T-cell (primary cell): ENCODE measurements at regions of chr2 and their contacts with region 1.

Region 1: DNA sequence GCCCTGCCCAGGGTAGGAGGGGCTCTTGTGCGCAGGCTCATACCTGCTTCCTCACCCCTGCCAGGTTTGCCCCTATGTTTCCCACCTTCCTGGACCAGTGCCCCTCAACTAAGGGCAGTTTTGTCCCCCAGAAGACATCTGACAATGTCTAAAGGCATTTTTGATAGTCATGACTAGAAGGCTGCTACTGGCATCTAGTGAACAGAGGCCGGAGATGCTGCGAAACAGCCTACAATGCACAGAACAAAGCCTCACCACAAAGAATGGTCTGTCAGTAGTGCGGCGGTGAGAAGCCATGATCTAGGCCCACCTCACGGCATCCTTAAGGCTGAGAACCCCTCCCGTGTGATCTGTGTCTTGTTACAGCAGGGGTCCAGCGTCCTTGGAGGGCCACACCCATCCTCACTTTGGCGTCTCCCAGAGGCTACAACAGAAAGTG is 96.0 kb downstream of the TMEM17 start:
- DNase-seq: peak in 1 of 35 experiments; percentile 11
- ATAC-seq: no peak
- H3K4me3 ChIP-seq: no peak overlapping the region
- H3K4me3 Mint-ChIP-seq: no peak overlapping the region
- H3K27ac ChIP-seq: no peak overlapping the region
- H3K27ac Mint-ChIP-seq: no peak overlapping the region
- H3K4me1 ChIP-seq: peaks cover 0 to 9% of the 10 kb centered on the region in 2 experiments
- H3K4me1 Mint-ChIP-seq: peaks cover 0 to 11% (median 3%) of the 10 kb centered on the region in 3 donors
- H3K27me3 ChIP-seq: no peaks in the 10 kb centered on the region
- H3K27me3 Mint-ChIP-seq: no peaks in the 10 kb centered on the region

Region 2: GRCh38 chr2:61993444-61994024 is 416.5 kb before region 1 on chr2:
- CTCF ChIA-PET with region 1: interaction called, 5 to 10 read pairs
- POLR2A ChIA-PET with region 1: no interaction called
- DNase-seq: peak in 9 of 35 experiments; percentile 1 to 57 (median 6)
- ATAC-seq: no peak
- H3K4me3 ChIP-seq: no peak overlapping the region
- H3K4me3 Mint-ChIP-seq: no peak overlapping the region
- H3K27ac ChIP-seq: no peak overlapping the region
- H3K27ac Mint-ChIP-seq: no peak overlapping the region
- H3K4me1 ChIP-seq: no peaks in the 10 kb centered on the region
- H3K4me1 Mint-ChIP-seq: peaks cover 2 to 13% (median 4%) of the 10 kb centered on the region in 3 donors
- H3K27me3 ChIP-seq: no peaks in the 10 kb centered on the region
- H3K27me3 Mint-ChIP-seq: no peaks in the 10 kb centered on the region

Region 3: GRCh38 chr2:62254056-62254917 is 155.7 kb before region 1 on chr2:
- CTCF ChIA-PET with region 1: no interaction called
- POLR2A ChIA-PET with region 1: no interaction called
- DNase-seq: no peak
- ATAC-seq: no peak
- H3K4me3 ChIP-seq: no peak overlapping the region
- H3K4me3 Mint-ChIP-seq: no peak overlapping the region
- H3K27ac ChIP-seq: no peak overlapping the region
- H3K27ac Mint-ChIP-seq: no peak overlapping the region
- H3K4me1 ChIP-seq: no peaks in the 10 kb centered on the region
- H3K4me1 Mint-ChIP-seq: no peaks in the 10 kb centered on the region
- H3K27me3 ChIP-seq: no peaks in the 10 kb centered on the region
- H3K27me3 Mint-ChIP-seq: no peaks in the 10 kb centered on the region